CD4-positive, alpha-beta memory T cell (primary cell): ENCODE measurements at regions of chr16 and their contacts with region 1.

Region 1: GRCh38 chr16:10509534-10510025 is 70.8 kb downstream of the EMP2 start:
- DNase-seq: peak; percentile 52 to 72 (median 66)
- H3K4me3 ChIP-seq: no peak overlapping the region
- H3K4me3 Mint-ChIP-seq: peak overlapping the region in 1 of 8 donors; percentile 5
- H3K27ac ChIP-seq: no peak overlapping the region
- H3K27ac Mint-ChIP-seq: no peak overlapping the region
- H3K4me1 ChIP-seq: no peaks in the 10 kb centered on the region
- H3K4me1 Mint-ChIP-seq: peaks cover 3 to 6% (median 5%) of the 10 kb centered on the region in 4 donors
- H3K27me3 ChIP-seq: no peaks in the 10 kb centered on the region
- H3K27me3 Mint-ChIP-seq: peaks cover 1 to 4% of the 10 kb centered on the region in 2 donors

Region 2: GRCh38 chr16:10314811-10315210 is 194.8 kb before region 1 on chr16:
- CTCF ChIA-PET with region 1: interaction called, 279 read pairs
- POLR2A ChIA-PET with region 1: interaction called, 10 read pairs
- intact Hi-C with region 1: no loop called
- DNase-seq: peak in 4 of 5 donors; percentile 37 to 57 (median 46)
- H3K4me3 ChIP-seq: no peak overlapping the region
- H3K4me3 Mint-ChIP-seq: no peak overlapping the region
- H3K27ac ChIP-seq: no peak overlapping the region
- H3K27ac Mint-ChIP-seq: peak overlapping the region in 1 of 7 donors; percentile 65
- H3K4me1 ChIP-seq: peaks cover 8% of the 10 kb centered on the region
- H3K4me1 Mint-ChIP-seq: peaks cover 14 to 29% (median 20%) of the 10 kb centered on the region in 4 donors
- H3K27me3 ChIP-seq: no peaks in the 10 kb centered on the region
- H3K27me3 Mint-ChIP-seq: no peaks in the 10 kb centered on the region

Region 3: GRCh38 chr16:10521681-10522274 is 12.2 kb after region 1 on chr16:
- CTCF ChIA-PET with region 1: interaction called, 25 read pairs
- POLR2A ChIA-PET with region 1: no interaction called
- intact Hi-C with region 1: no loop called
- DNase-seq: peak in 3 of 5 donors; percentile 34 to 42 (median 37)
- H3K4me3 ChIP-seq: no peak overlapping the region
- H3K4me3 Mint-ChIP-seq: no peak overlapping the region
- H3K27ac ChIP-seq: no peak overlapping the region
- H3K27ac Mint-ChIP-seq: no peak overlapping the region
- H3K4me1 ChIP-seq: no peaks in the 10 kb centered on the region
- H3K4me1 Mint-ChIP-seq: peaks cover 0 to 4% (median 2%) of the 10 kb centered on the region in 4 donors
- H3K27me3 ChIP-seq: no peaks in the 10 kb centered on the region
- H3K27me3 Mint-ChIP-seq: peaks cover 0 to 2% of the 10 kb centered on the region in 2 donors

Region 4: GRCh38 chr16:10737068-10737625 is 227.6 kb after region 1 on chr16:
- CTCF ChIA-PET with region 1: interaction called, 171 read pairs
- POLR2A ChIA-PET with region 1: no interaction called
- intact Hi-C with region 1: loop called (anchors 1 kb)
- DNase-seq: peak; percentile 76 to 78 (median 78)
- H3K4me3 ChIP-seq: peak overlapping the region in 1 of 2 donors; percentile 20
- H3K4me3 Mint-ChIP-seq: peak overlapping the region; percentile 64 to 82 (median 74)
- H3K27ac ChIP-seq: peak overlapping the region; percentile 19
- H3K27ac Mint-ChIP-seq: peak overlapping the region; percentile 36 to 91 (median 86)
- H3K4me1 ChIP-seq: peaks cover 14% of the 10 kb centered on the region
- H3K4me1 Mint-ChIP-seq: peaks cover 3 to 12% (median 9%) of the 10 kb centered on the region in 4 donors
- H3K27me3 ChIP-seq: no peaks in the 10 kb centered on the region
- H3K27me3 Mint-ChIP-seq: no peaks in the 10 kb centered on the region

Region 5: DNA sequence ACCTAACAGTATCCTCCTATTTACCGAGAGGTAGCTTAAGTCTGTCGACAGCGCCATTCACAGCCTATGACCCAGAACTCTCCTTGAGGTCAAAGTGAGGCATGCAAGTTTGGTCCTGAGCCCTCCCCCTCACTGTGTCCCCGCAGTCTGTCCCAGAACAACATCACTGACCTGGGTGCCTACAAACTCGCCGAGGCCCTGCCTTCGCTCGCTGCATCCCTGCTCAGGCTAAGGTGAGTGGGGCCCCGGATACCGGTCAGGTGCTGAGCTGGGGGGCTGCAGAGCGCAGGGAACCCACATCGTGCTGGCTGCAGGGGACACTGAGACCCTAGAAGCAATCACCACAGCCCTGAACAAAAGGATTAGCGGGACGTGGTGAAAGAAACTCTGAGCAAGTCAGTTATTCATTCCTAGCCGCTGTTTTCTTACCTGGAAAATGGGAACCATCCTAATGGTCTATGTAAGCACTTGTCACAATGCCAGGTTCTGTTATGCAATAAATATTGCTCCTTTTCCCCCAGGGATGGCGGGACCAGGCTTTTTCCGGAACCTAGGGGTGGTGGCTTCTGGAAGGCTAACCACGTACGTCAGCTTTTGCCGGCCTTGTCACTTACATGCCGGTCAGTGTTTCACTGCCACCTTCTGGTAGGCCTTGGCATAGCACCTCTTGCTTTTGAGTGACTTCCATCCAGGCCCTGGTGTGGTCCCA is 408.9 kb after region 1 on chr16:
- CTCF ChIA-PET with region 1: interaction called, 10 read pairs
- POLR2A ChIA-PET with region 1: no interaction called
- intact Hi-C with region 1: no loop called
- DNase-seq: peak; percentile 53 to 73 (median 59)
- H3K4me3 ChIP-seq: no peak overlapping the region
- H3K4me3 Mint-ChIP-seq: peak overlapping the region in 2 of 8 donors; percentile 40 to 43
- H3K27ac ChIP-seq: no peak overlapping the region
- H3K27ac Mint-ChIP-seq: peak overlapping the region in 1 of 7 donors; percentile 11
- H3K4me1 ChIP-seq: no peaks in the 10 kb centered on the region
- H3K4me1 Mint-ChIP-seq: peaks cover 0 to 6% (median 4%) of the 10 kb centered on the region in 4 donors
- H3K27me3 ChIP-seq: no peaks in the 10 kb centered on the region
- H3K27me3 Mint-ChIP-seq: peaks cover 0 to 2% of the 10 kb centered on the region in 2 donors